ENCODE measurements at regions of chr1 and their contacts with region 1.

Region 1: DNA sequence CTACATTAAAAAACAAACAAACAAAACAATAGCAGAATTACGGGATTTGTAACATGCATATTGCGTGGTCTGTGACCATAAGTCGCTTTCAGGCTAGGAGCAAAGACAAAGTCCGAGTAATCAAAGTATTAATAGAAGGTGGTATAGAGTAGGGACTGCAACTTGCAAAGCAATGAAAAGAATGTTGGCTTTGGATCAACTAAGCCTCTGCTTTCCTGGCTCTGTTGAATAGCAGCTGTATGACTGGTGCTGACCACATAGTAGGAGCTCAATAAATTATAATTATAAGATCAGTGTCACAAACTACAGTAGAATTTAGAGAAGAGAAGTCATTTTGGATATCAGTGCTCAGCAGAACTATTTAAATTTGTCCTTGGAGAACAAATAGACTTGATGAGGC is 586.4 kb downstream of the DPYD start:
- DNase-seq: no peak
- ATAC-seq: no peak
- H3K4me3 Mint-ChIP-seq: no peak overlapping the region
- H3K27ac Mint-ChIP-seq: no peak overlapping the region
- H3K4me1 Mint-ChIP-seq: no peaks in the 10 kb centered on the region
- H3K27me3 Mint-ChIP-seq: no peaks in the 10 kb centered on the region

Region 2: GRCh38 chr1:97396463-97396862 is 62.0 kb after region 1 on chr1:
- CTCF ChIA-PET with region 1: no interaction called
- POLR2A ChIA-PET with region 1: no interaction called
- intact Hi-C with region 1: loop called in 1 of 2 experiments (anchors 10 kb)
- DNase-seq: no peak
- ATAC-seq: no peak
- H3K4me3 Mint-ChIP-seq: no peak overlapping the region
- H3K27ac Mint-ChIP-seq: no peak overlapping the region
- H3K4me1 Mint-ChIP-seq: no peaks in the 10 kb centered on the region
- H3K27me3 Mint-ChIP-seq: no peaks in the 10 kb centered on the region